Activated CD8-positive, alpha-beta memory T cell treated with anti-CD3 and anti-CD28 coated beads, Interleukin-2, amount 10 ng/mL, durations not matched to agents 7 days and 5 days (primary cell): ENCODE measurements at regions of chr14 and their contacts with region 1.

Region 1: DNA sequence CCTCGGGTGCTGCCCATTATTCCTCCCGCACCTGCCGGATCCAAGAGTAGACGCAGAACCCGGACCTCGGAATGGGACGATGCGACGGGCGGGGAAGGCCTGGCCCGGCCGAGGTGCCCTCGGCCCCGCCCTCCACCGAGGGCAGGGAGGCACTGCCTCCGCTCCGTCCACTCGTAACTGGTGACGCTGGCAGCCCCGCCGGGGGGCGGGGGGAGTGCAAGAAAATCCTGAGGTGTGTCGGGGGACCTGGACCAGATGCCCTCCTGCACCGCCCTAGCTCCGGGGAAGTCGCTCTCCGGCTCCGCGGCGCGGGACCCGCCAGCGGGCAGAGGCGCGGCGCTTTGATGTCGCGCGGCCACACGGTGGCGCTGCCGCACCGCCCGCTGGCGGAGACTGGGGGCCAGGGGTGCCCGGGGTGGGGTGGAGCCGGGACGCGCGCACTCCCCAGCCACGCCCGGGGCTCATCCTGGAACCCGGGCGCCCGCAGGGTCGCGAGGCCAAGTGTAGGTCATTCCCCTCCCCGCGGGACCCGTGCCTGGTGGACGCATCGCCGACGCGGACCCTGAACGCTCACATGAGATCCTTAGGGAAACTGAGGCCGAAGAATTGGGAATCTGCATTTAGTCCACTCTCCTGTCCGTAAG is 202.8 kb downstream of the TTC8 start:
- DNase-seq: peak; percentile 63
- ATAC-seq: peak; percentile 95
- H3K4me3 Mint-ChIP-seq: peak overlapping the region; percentile 51
- H3K27ac Mint-ChIP-seq: no peak overlapping the region
- H3K4me1 Mint-ChIP-seq: peaks cover 7% of the 10 kb centered on the region
- H3K27me3 Mint-ChIP-seq: peaks cover 68% of the 10 kb centered on the region

Region 2: DNA sequence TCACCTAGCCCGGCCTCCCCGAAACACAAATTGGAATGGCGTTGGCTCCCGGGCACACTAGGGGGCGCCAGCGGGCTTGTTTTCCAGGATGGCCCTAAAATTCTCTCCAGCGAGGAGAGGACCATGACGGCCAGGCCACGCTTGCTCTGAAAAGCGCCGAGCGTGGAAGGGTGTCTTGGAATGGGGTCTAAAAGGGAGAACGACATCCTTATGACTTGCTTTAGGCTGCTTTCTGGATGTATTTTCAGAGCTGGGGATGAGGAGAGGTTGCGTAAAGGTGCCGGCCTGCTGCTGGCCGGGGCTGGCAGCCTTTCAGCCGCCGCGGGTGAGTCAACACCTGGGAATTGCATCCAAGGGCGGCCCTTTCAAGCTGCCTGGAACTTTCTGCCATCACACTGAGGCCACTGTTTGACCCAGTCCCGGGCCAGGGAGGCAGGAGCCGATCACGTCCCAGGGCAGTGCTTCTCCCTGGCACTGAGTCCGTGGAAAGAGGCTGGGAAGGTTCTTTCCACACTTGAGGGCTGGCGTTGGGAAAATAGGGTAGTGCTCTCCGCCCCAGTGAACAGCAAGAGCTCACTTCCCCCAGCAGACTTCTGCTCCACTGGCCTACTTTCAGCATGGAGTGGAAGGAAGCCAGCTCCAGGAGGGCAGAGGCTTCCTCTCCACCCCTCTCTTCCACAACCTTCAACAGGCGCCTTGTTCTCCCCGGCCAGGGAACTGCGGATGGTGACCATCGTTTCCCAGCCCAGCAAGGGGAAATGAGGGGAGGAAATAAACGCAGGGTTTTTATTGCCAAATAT is 13.4 kb after region 1 on chr14:
- CTCF ChIA-PET with region 1: interaction called, 11 read pairs
- DNase-seq: peak; percentile 83
- ATAC-seq: peak; percentile 78
- H3K4me3 Mint-ChIP-seq: peak overlapping the region; percentile 44
- H3K27ac Mint-ChIP-seq: no peak overlapping the region
- H3K4me1 Mint-ChIP-seq: peaks cover 7% of the 10 kb centered on the region
- H3K27me3 Mint-ChIP-seq: peaks cover 34% of the 10 kb centered on the region

Region 3: GRCh38 chr14:89317051-89317691 is 290.0 kb after region 1 on chr14:
- CTCF ChIA-PET with region 1: no interaction called
- DNase-seq: no peak
- ATAC-seq: no peak
- H3K4me3 Mint-ChIP-seq: no peak overlapping the region
- H3K27ac Mint-ChIP-seq: no peak overlapping the region
- H3K4me1 Mint-ChIP-seq: peaks cover 12% of the 10 kb centered on the region
- H3K27me3 Mint-ChIP-seq: no peaks in the 10 kb centered on the region

Region 4: GRCh38 chr14:89773644-89774316 is 746.6 kb after region 1 on chr14:
- CTCF ChIA-PET with region 1: interaction called, 10 read pairs
- DNase-seq: peak; percentile 84
- ATAC-seq: peak; percentile 90
- H3K4me3 Mint-ChIP-seq: peak overlapping the region; percentile 25
- H3K27ac Mint-ChIP-seq: peak overlapping the region; percentile 66
- H3K4me1 Mint-ChIP-seq: peaks cover 24% of the 10 kb centered on the region
- H3K27me3 Mint-ChIP-seq: peaks cover 15% of the 10 kb centered on the region

Region 5: GRCh38 chr14:89915114-89915878 is 888.1 kb after region 1 on chr14:
- CTCF ChIA-PET with region 1: interaction called, 22 read pairs
- DNase-seq: peak; percentile 69
- ATAC-seq: no peak
- H3K4me3 Mint-ChIP-seq: no peak overlapping the region
- H3K27ac Mint-ChIP-seq: no peak overlapping the region
- H3K4me1 Mint-ChIP-seq: no peaks in the 10 kb centered on the region
- H3K27me3 Mint-ChIP-seq: peaks cover 18% of the 10 kb centered on the region